Sigmoid colon (tissue), 7 donors: ENCODE measurements at regions of chr3 and their contacts with region 1.

Region 1: DNA sequence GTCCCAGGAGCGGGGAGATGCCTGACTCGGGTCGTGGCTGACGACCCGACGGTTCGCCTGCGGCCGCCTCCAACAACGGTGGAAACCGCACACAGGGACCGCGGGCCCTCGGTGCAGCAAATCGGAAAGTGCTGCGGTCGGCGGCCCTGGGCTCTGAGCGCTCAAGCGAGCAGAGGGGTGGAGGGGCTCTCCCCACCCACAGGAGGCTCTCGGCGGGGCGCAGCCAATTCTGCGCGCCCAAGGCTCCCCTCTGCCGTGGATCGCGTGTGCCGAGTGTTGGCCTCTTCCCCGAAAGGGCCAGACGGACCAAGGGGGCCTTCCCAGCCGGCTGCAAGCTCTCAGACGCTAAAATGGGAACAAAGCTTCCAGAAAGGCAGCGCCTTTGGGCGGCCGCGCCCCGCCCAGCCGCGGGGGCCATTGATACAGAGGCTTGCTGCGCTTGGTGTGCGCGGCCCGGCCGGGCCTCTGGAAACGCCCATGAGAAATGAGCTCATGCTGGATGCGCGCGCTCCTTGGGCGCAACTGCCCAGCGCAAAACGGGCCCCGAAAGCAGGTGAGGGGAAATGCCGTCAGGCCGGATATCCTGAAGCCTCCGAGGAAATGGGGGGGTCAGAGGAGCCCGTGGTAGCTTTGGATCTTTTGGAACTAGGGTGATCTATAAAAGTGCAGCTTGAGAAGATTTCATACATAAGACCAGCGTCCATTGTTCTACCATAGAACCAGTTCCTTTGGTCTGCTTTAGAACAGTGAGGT is 1.2 kb upstream of the GSK3B start:
- DNase-seq: peak; percentile 96
- H3K4me3 ChIP-seq: peak overlapping the region; percentile 67 to 96 (median 84)
- H3K27ac ChIP-seq: peak overlapping the region; percentile 99 to 100 (median 100)
- H3K4me1 ChIP-seq: peaks cover 0 to 38% (median 23%) of the 10 kb centered on the region in 4 donors
- H3K27me3 ChIP-seq: no peaks in the 10 kb centered on the region
- CTCF ChIP-seq: no peak
- EP300 ChIP-seq: peak in 1 of 4 donors; percentile 34
- POLR2A ChIP-seq: peak; percentile 92 to 93

Region 2: GRCh38 chr3:119702530-119703157 is 392.8 kb before region 1 on chr3 and contains the start of gene CFAP91:
- intact Hi-C with region 1: loop called (anchors 10 kb)
- DNase-seq: peak; percentile 99
- H3K4me3 ChIP-seq: peak within 1 kb of the TSS; percentile 49 to 64 (median 58)
- H3K27ac ChIP-seq: peak within 1 kb of the TSS; percentile 47 to 71 (median 56)
- H3K4me1 ChIP-seq: peaks cover 0 to 17% (median 13%) of the 10 kb centered on the region in 4 donors
- H3K27me3 ChIP-seq: no peaks in the 10 kb centered on the region
- CTCF ChIP-seq: no peak
- EP300 ChIP-seq: no peak
- POLR2A ChIP-seq: no peak
- total RNA-seq, gene CFAP91: 1.4 to 11.8 (median 8.8) TPM

Region 3: DNA sequence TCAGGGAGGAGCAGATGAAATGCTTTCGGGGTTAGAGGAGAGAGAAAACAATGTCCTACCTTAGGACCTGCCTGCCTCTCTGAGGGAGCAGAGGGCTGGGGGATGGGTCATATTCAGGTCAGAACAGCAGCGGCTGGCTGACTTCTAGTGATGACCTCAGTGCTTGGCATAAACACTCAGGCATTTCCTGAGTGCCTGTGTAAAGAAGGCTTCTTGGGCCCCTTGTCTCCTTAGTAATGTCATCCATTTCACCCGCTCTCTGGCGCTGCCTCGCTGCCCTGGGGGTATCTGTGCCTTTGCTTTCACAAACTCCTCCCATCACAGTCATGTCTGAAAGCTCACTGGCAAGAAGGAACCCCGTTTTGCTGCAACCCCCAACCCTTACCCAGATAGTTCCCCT is 81.7 kb after region 1 on chr3:
- intact Hi-C with region 1: loop called (anchors 5 kb)
- DNase-seq: no peak
- H3K4me3 ChIP-seq: no peak overlapping the region
- H3K27ac ChIP-seq: peak overlapping the region; percentile 17 to 75 (median 65)
- H3K4me1 ChIP-seq: peaks cover 0 to 25% (median 18%) of the 10 kb centered on the region in 4 donors
- H3K27me3 ChIP-seq: no peaks in the 10 kb centered on the region
- CTCF ChIP-seq: no peak
- EP300 ChIP-seq: no peak
- POLR2A ChIP-seq: no peak

Region 4: DNA sequence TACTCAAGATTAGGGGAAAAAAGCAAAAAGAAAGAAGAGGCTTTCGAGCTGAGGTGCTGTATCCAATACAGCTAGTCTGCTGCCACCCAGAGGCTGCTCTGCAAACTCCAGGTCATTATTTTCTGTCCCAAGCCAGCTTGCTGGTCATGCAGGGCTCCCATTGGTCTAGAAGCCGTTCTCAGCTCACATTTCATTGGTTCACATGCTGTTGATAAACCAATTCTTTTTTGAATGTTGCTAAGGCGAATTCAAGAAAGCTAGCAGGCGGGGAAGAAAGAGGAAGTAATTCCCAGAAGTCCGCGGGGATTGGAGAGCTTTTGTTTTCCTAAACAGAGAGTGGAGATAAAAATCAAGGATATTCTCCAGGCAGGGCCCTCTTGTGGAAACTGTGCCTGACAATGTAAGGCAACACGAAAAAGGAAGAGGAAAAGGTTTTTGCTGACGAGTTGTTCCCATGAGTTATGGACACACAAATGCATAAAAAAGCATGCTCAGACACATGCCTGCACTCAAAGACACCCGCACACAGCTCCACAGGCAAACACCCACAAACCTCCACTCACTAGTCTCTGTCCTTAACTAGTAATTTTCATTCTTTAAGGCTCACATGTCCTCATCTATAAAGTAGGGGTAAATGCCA is 322.0 kb after region 1 on chr3:
- intact Hi-C with region 1: loop called (anchors 2 kb)
- DNase-seq: peak; percentile 96
- H3K4me3 ChIP-seq: peak overlapping the region in 3 of 4 donors; percentile 8 to 33 (median 29)
- H3K27ac ChIP-seq: peak overlapping the region; percentile 79 to 96 (median 85)
- H3K4me1 ChIP-seq: peaks cover 0 to 70% (median 65%) of the 10 kb centered on the region in 4 donors
- H3K27me3 ChIP-seq: no peaks in the 10 kb centered on the region
- CTCF ChIP-seq: peak; percentile 78 to 93 (median 86)
- EP300 ChIP-seq: no peak
- POLR2A ChIP-seq: no peak

Region 5: GRCh38 chr3:120742198-120742849 is 646.9 kb after region 1 on chr3 and contains the starts of genes GTF2E1 and RABL3:
- intact Hi-C with region 1: loop called (anchors 5 kb)
- DNase-seq: peak; percentile 98
- H3K4me3 ChIP-seq: peak within 1 kb of the TSS; percentile 79 to 94 (median 87)
- H3K27ac ChIP-seq: peak within 1 kb of the TSS; percentile 89 to 93 (median 92)
- H3K4me1 ChIP-seq: peaks cover 0 to 19% (median 10%) of the 10 kb centered on the region in 4 donors
- H3K27me3 ChIP-seq: no peaks in the 10 kb centered on the region
- CTCF ChIP-seq: no peak
- EP300 ChIP-seq: peak in 1 of 4 donors; percentile 27
- POLR2A ChIP-seq: peak; percentile 45 to 49
- total RNA-seq, gene GTF2E1: 6.9 to 12.5 (median 10.3) TPM
- total RNA-seq, gene RABL3: 9.4 to 13.2 (median 12.6) TPM